ENCODE measurements at regions of chr17 and their contacts with region 1.

Region 1: GRCh38 chr17:43324205-43324893 is 74.4 kb upstream of the ARL4D start:
- DNase-seq: peak in 1 of 2 experiments; percentile 58
- ATAC-seq: peak; percentile 30 to 83; a peak in 4 of 6 replicates
- H3K4me3 ChIP-seq: no peak overlapping the region
- H3K27ac ChIP-seq: no peak overlapping the region
- H3K4me1 ChIP-seq: no peaks in the 10 kb centered on the region
- CTCF ChIP-seq: no peak
- EP300 ChIP-seq: no peak
- POLR2A ChIP-seq: no peak
- RAD21 ChIP-seq: no peak

Region 2: DNA sequence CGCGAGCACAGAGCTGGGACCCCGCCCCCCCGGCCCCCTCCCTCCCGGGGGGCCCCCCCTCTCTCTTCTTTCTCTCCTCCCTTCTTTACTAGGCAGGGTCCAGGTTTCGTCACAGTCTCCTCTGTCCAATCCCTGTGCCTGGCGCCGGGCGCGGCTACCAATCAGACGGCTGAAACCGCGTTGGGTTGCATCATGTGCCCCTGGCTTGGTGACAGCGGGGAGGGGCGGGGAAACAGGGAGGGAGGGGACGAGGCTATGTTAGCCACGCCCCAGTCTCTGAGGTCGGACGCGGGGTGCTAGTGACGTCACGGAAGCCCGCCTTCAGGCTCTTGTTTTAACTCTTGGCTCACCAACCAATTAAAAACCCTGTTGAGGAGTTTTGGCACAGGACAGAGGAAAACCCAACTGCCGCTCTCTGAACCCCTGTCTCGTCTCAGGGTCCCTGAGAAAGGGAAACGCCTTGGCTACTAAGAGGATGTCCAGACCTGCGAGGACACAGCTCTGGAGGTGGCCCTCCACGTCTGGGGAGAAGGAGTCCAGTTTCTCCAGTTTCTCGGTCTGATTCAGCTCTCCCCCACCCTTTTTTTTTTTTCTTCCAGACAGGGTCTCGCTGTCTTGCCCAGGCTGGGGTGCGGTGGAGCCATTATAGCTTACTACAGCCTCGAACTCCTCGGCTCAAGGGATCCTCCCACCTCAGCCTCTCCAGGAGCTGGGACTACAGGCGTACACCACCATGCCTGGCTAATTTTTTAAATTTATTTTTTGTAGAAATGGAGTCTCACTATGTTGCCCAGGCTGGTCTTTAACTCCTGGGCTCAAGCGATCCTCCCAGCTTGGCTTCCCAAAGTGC is 647.1 kb before region 1 on chr17:
- CTCF ChIA-PET with region 1: no interaction called
- POLR2A ChIA-PET with region 1: no interaction called
- DNase-seq: peak; percentile 100
- ATAC-seq: peak; percentile 45 to 64
- H3K4me3 ChIP-seq: peak overlapping the region; percentile 87
- H3K27ac ChIP-seq: peak overlapping the region; percentile 95 to 98
- H3K4me1 ChIP-seq: peaks cover 56% of the 10 kb centered on the region
- CTCF ChIP-seq: no peak
- EP300 ChIP-seq: peak in 1 of 2 experiments; percentile 18; a peak in 1 of 5 replicates
- POLR2A ChIP-seq: no peak
- RAD21 ChIP-seq: no peak; a peak in 2 of 5 replicates

Region 3: DNA sequence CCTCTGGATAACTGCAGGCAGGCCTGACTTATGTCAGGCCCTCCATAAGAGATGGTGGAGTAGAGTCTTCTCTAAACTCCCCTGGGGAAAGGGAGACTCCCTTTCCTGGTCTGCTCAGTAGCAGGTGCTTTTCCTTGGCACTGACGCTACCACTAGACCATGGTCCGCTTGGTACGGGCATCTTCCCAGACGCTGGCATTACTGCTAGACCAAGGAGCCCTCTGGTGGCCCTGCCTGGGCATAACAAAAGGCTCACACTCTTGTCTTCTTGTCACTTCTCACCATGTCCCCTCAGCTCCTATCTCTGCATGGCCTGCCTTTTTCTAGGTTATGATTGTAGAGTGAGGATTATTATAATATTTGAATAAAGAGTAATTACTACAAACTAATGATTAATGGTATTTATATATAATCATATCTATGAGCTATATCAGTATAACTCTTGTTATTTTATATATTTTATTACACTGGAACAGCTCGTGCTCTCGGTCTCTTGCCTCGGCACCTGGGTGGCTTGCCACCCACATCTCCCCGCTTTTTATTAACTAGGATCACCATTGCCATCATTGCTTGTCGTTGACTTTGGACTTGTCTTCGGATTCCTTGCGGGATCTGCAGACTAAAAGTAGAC is 14.7 kb after region 1 on chr17:
- CTCF ChIA-PET with region 1: interaction called, 30 read pairs
- POLR2A ChIA-PET with region 1: no interaction called
- DNase-seq: peak in 1 of 2 experiments; percentile 83
- ATAC-seq: peak; percentile 41 to 74; a peak in 4 of 6 replicates
- H3K4me3 ChIP-seq: no peak overlapping the region
- H3K27ac ChIP-seq: no peak overlapping the region
- H3K4me1 ChIP-seq: peaks cover 11% of the 10 kb centered on the region
- CTCF ChIP-seq: peak; percentile 81
- EP300 ChIP-seq: no peak
- POLR2A ChIP-seq: no peak
- RAD21 ChIP-seq: peak; percentile 79 to 83

Measured in A549 (cell line).